ENCODE measurements at regions of chr16 and their contacts with region 1.

Region 1: GRCh38 chr16:24010440-24011089 is 174.8 kb downstream of the PRKCB start:
- DNase-seq: peak; percentile 58 to 92 (median 77)
- ATAC-seq: peak; percentile 21 to 41 (median 32)
- H3K4me3 ChIP-seq: no peak overlapping the region
- H3K4me3 Mint-ChIP-seq: no peak overlapping the region
- H3K27ac ChIP-seq: no peak overlapping the region
- H3K27ac Mint-ChIP-seq: peak overlapping the region in 1 of 2 donors; percentile 52
- H3K4me1 ChIP-seq: peaks cover 24 to 46% of the 10 kb centered on the region in 2 experiments
- H3K4me1 Mint-ChIP-seq: peaks cover 68 to 83% (median 69%) of the 10 kb centered on the region in 3 donors
- H3K27me3 ChIP-seq: no peaks in the 10 kb centered on the region
- H3K27me3 Mint-ChIP-seq: no peaks in the 10 kb centered on the region

Region 2: GRCh38 chr16:23803591-23804123 is 206.9 kb before region 1 on chr16:
- CTCF ChIA-PET with region 1: interaction called, 14 to 146 read pairs
- POLR2A ChIA-PET with region 1: no interaction called
- DNase-seq: peak; percentile 47 to 79 (median 68)
- ATAC-seq: peak; percentile 94 to 99 (median 96)
- H3K4me3 ChIP-seq: no peak overlapping the region
- H3K4me3 Mint-ChIP-seq: peak overlapping the region in 1 of 3 donors; percentile 57
- H3K27ac ChIP-seq: no peak overlapping the region
- H3K27ac Mint-ChIP-seq: peak overlapping the region in 1 of 2 donors; percentile 7
- H3K4me1 ChIP-seq: peaks cover 0 to 7% of the 10 kb centered on the region in 2 experiments
- H3K4me1 Mint-ChIP-seq: peaks cover 10 to 16% (median 16%) of the 10 kb centered on the region in 3 donors
- H3K27me3 ChIP-seq: no peaks in the 10 kb centered on the region
- H3K27me3 Mint-ChIP-seq: no peaks in the 10 kb centered on the region

Region 3: GRCh38 chr16:23823475-23824384 is 186.8 kb before region 1 on chr16:
- CTCF ChIA-PET with region 1: interaction called, 3 to 11 read pairs
- POLR2A ChIA-PET with region 1: no interaction called
- DNase-seq: no peak
- ATAC-seq: no peak
- H3K4me3 ChIP-seq: no peak overlapping the region
- H3K4me3 Mint-ChIP-seq: no peak overlapping the region
- H3K27ac ChIP-seq: no peak overlapping the region
- H3K27ac Mint-ChIP-seq: peak overlapping the region in 1 of 2 donors; percentile 71
- H3K4me1 ChIP-seq: peaks cover 19 to 23% of the 10 kb centered on the region in 2 experiments
- H3K4me1 Mint-ChIP-seq: peaks cover 30 to 43% (median 42%) of the 10 kb centered on the region in 3 donors
- H3K27me3 ChIP-seq: no peaks in the 10 kb centered on the region
- H3K27me3 Mint-ChIP-seq: no peaks in the 10 kb centered on the region

Region 4: GRCh38 chr16:24070851-24071250 is 60.3 kb after region 1 on chr16:
- CTCF ChIA-PET with region 1: no interaction called
- POLR2A ChIA-PET with region 1: no interaction called
- DNase-seq: peak in 10 of 35 experiments; percentile 2 to 43 (median 3)
- ATAC-seq: peak in 1 of 4 experiments; percentile 54
- H3K4me3 ChIP-seq: no peak overlapping the region
- H3K4me3 Mint-ChIP-seq: no peak overlapping the region
- H3K27ac ChIP-seq: no peak overlapping the region
- H3K27ac Mint-ChIP-seq: peak overlapping the region in 1 of 2 donors; percentile 15
- H3K4me1 ChIP-seq: peaks cover 0 to 5% of the 10 kb centered on the region in 2 experiments
- H3K4me1 Mint-ChIP-seq: peaks cover 23 to 52% (median 37%) of the 10 kb centered on the region in 3 donors
- H3K27me3 ChIP-seq: no peaks in the 10 kb centered on the region
- H3K27me3 Mint-ChIP-seq: no peaks in the 10 kb centered on the region